AG04450 (cell line): ENCODE measurements at regions of chr6 and their contacts with region 1.

Region 1: DNA sequence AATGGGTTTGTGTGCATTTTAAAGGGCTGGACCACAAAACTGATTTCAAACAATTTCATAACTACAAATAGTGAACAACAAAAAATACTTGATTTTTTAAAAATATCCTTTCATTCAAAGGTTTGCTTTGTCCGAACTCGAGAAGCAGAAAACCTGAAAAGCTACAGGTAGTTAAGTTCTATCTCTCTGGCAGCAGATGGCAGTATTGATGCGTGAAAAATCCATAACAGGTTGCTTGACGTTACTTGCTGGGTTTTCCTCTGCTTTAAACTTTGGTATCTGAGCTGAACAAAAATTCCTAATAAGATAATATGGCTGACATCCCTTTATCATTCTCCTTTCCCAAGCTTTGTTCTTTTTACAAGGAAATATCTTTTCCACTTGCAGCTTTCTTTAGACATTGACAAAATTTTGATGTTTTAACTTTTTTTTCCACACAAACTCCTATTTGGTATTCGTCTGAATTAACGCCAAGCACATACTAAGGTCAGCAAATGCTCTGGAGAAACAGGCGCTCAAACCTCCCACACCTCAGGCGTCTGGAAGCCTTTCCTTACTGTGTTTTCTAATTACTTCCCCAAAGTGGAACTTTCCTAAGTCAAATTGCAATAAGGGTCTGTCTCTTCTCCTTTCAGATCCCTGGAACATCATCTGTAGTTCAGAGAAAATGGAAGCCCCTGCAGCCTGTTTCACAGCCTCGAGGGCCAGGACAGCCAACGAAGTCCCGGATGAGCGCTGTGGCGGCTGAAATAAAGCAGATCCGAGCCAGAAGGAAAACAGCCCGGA is 50.3 kb upstream of the GFRAL start:
- DNase-seq: peak; percentile 26
- H3K4me3 ChIP-seq: no peak overlapping the region
- H3K27ac ChIP-seq: no peak overlapping the region
- H3K27me3 ChIP-seq: no peaks in the 10 kb centered on the region
- CTCF ChIP-seq: peak; percentile 75

Region 2: GRCh38 chr6:54784011-54784410 is 492.9 kb before region 1 on chr6:
- CTCF ChIA-PET with region 1: no interaction called
- POLR2A ChIA-PET with region 1: no interaction called
- DNase-seq: no peak
- H3K4me3 ChIP-seq: peak overlapping the region; percentile 46
- H3K27ac ChIP-seq: no peak overlapping the region
- H3K27me3 ChIP-seq: no peaks in the 10 kb centered on the region
- CTCF ChIP-seq: no peak

Region 3: GRCh38 chr6:55212156-55212555 is 64.8 kb before region 1 on chr6:
- CTCF ChIA-PET with region 1: no interaction called
- POLR2A ChIA-PET with region 1: no interaction called
- DNase-seq: no peak
- H3K4me3 ChIP-seq: no peak overlapping the region
- H3K27ac ChIP-seq: no peak overlapping the region
- H3K27me3 ChIP-seq: no peaks in the 10 kb centered on the region
- CTCF ChIP-seq: no peak

Region 4: DNA sequence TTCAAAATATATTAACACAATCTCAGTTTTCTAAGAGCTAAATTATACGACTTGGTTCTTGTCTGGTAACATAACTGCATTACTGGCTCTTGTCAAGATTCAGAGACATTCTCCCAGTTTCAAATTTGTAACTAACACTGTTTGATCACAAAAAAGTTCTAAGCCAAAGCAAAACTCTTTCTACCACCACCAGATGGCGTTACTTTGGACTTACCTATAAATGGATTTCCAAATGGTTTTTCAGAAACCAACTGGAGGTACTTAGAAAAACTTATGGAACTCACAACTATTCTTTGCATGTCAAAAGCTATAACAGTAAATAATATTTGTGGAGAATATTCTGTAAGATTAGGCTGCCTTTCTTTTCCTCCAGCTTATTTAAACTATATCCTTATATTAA is 16.2 kb after region 1 on chr6:
- CTCF ChIA-PET with region 1: interaction called, 21 read pairs
- POLR2A ChIA-PET with region 1: no interaction called
- DNase-seq: no peak
- H3K4me3 ChIP-seq: no peak overlapping the region
- H3K27ac ChIP-seq: no peak overlapping the region
- H3K27me3 ChIP-seq: no peaks in the 10 kb centered on the region
- CTCF ChIP-seq: peak; percentile 47

Region 5: GRCh38 chr6:55941702-55942101 is 664.8 kb after region 1 on chr6:
- CTCF ChIA-PET with region 1: interaction called, 20 read pairs
- POLR2A ChIA-PET with region 1: no interaction called
- DNase-seq: no peak
- H3K4me3 ChIP-seq: no peak overlapping the region
- H3K27ac ChIP-seq: no peak overlapping the region
- H3K27me3 ChIP-seq: no peaks in the 10 kb centered on the region
- CTCF ChIP-seq: peak; percentile 56

Region 6: DNA sequence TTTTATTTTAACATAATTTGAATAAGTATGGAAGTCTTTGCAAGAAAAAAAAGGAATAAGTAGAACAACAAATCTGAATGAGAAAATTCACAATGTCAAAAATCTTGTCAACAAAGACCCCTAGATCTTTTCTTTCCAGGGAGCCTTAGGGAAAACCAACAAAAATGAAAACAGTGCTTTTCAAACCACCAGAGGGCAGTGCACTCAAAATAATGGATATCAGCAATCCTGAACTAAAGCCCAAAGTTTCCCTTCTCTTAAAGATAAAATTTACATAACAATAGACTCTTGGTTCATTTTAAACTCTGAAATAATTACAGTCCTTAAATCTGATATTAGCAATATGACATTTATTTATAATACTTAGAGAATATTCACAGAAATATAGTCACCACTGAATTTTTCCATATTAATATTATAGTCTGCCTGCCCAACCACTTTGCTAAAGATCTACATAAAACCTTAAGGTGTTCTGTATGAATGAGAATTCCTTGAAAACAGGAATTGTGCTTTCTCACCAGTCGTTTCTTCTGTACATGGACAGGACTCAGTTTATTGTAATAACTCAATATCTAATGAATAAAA is 703.8 kb after region 1 on chr6:
- CTCF ChIA-PET with region 1: interaction called, 23 read pairs
- POLR2A ChIA-PET with region 1: no interaction called
- DNase-seq: no peak
- H3K4me3 ChIP-seq: no peak overlapping the region
- H3K27ac ChIP-seq: no peak overlapping the region
- H3K27me3 ChIP-seq: no peaks in the 10 kb centered on the region
- CTCF ChIP-seq: peak; percentile 70